Mammary epithelial cell (primary cell): ENCODE measurements at regions of chr6 and their contacts with region 1.

Region 1: DNA sequence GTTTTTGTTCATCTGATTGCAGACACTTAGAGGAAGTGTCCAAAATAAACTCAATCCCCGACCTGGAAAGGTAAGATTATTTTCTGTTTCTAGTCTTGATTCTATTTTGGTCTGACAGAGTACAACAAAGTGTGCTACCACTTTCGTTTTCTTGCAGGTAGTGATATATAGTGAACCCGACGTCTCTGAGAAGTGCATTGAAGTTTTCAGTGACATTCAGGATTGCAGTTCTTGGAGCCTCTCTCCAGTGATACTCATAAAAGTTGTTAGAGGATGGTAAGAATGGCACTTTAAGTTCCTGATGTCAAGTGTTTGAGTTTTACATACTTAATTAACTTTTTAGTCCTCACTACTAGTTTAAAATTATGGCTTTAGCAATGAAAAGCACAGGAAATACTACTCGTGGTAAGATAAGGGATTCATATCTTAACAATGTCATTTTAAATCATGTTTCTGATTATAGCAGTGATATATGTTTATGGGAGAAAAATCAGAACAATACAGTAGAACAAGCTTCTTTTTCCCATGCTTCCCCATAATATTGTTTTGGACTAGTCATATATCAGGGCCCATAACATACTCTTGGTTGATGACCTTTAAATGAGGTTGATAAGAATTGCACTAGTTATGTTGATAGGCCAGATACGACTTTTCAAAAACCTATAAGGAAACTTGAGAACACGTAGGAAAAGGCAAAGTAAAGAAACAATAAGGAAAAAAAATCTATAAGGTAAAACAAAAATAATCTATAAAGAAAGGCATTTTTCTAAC is 104.0 kb downstream of the RTN4IP1 start:
- DNase-seq: peak; percentile 54
- H3K4me3 ChIP-seq: peak overlapping the region; percentile 14 to 38 (median 18)
- H3K27ac ChIP-seq: peak overlapping the region; percentile 60
- H3K4me1 ChIP-seq: peaks cover 28% of the 10 kb centered on the region
- H3K27me3 ChIP-seq: no peaks in the 10 kb centered on the region
- CTCF ChIP-seq: no peak

Region 2: GRCh38 chr6:106237286-106237685 is 288.0 kb before region 1 on chr6:
- CTCF ChIA-PET with region 1: no interaction called
- dilution Hi-C with region 1: no loop called
- in situ Hi-C with region 1: no loop called
- intact Hi-C with region 1: no loop called
- DNase-seq: no peak
- H3K4me3 ChIP-seq: no peak overlapping the region
- H3K27ac ChIP-seq: no peak overlapping the region
- H3K4me1 ChIP-seq: no peaks in the 10 kb centered on the region
- H3K27me3 ChIP-seq: no peaks in the 10 kb centered on the region
- CTCF ChIP-seq: no peak

Region 3: DNA sequence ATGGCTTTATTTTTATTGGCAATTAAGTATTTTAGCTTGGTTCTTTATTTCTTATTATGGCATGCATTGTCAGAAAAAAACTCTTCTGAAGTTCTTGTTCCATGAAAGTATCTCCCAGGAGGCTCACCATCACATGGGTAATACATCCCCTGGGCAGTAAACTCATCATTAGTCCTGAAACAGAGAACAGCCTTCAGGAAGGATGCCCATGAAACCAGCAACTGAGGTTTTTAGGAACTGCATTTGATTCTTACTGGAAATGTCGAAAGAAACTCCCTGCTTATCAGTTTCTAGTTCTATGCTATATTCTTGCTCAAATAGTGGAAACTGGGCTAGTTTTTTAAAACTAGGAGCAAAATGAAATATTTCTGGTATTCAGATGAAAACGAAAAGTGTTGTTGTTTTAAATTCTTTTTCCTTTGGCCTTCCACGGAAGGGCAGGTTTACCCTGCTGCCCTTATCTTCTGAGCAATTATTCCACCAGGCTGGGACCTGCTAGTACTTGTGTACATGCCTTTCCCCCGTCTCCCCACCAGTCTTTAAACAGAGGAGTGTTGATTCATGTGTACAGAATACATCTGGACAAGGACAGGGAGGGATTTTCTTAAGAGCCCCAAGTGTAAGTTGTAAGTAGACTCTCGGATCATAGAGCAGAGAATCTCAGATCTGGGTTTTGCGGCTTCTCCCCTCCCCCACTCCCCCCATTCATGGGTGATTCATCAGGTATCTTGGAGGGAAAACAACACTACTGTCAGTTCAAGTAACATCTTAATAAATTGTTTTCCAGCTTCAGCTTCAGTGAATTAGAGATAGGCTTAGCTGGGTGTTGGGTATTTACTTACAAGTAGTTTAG is 22.5 kb after region 1 on chr6:
- CTCF ChIA-PET with region 1: no interaction called
- dilution Hi-C with region 1: no loop called
- in situ Hi-C with region 1: no loop called
- intact Hi-C with region 1: loop called (anchors 1 kb)
- DNase-seq: peak; percentile 94
- H3K4me3 ChIP-seq: no peak overlapping the region
- H3K27ac ChIP-seq: peak overlapping the region; percentile 98
- H3K4me1 ChIP-seq: peaks cover 44% of the 10 kb centered on the region
- H3K27me3 ChIP-seq: no peaks in the 10 kb centered on the region
- CTCF ChIP-seq: peak in 1 of 2 donors; percentile 7